ENCODE measurements at regions of chr14 and their contacts with region 1.

Region 1: DNA sequence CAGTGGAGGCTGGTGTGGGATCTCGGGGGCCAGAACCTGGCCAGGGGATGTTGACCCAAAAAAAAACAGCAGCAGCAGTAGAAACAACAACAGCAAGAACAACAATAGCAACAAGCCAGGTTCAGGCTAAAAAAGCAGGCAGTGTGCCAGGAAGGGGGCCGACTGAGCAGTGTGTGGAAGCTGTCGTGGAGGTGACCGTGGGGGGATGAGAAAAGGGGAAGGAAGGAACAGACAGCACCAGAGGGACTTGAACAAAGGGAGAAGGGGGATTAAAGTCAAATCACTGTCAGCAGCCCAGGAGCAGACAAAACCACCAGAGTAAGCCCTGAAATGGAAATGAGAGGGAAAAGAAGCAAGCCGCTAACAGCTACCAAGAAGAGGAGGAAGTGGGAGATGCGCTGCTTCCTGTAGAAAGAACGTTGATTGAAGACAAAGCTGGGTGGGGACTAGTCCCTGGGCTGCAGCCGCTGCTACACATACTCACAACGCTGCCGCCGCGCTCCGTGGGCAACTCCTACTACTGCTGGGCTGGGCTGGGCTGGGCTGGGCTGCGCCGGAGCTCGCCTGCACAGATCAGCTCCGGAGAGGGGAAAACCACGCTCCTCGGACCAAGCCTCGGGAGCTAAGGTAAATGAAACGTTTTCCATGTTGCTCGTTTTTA is at the start of gene GNG2:
- DNase-seq: peak; percentile 95
- H3K4me3 ChIP-seq: peak within 1 kb of the TSS; percentile 42 to 58 (median 56)
- H3K27ac ChIP-seq: peak within 1 kb of the TSS; percentile 29 to 71 (median 51)
- H3K4me1 ChIP-seq: peaks cover 12 to 24% (median 20%) of the 10 kb centered on the region in 4 donors
- H3K27me3 ChIP-seq: no peaks in the 10 kb centered on the region
- CTCF ChIP-seq: no peak
- EP300 ChIP-seq: no peak
- POLR2A ChIP-seq: no peak
- total RNA-seq, gene GNG2: 15.7 to 19.9 (median 17.7) TPM

Region 2: DNA sequence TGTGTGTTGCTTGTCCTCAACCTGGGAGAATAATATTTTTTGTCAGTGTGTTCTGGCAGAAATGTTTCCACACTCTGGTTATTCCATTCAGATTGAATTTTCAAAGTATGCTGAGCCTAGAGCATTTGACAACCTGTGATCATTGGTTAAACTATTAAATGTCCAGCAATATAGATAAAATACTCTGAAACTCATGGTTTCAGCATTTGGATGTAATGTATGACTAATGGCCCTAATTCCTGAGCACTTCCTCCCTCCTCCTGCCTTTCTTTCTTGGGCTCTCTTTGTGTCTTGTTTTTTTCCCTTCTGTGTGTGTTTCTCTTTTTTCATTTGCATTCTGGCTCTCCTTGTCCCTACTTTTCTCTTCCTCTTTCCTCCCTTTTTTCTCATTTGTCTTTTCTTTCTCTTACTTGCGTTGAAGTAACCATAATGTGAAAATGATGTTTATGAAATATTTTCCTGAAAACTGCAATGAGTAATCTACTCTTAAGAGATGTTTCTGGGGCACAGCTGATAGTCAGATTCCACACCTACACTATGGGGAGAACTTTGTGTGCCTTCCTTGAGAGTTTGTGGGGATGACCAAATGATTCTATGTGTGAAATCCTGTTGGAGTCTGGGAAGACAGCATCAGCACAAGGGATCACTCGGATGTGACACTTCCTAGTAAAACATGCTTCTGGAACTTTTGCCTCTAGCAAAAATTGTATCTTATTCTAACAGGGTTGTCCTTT is 134.0 kb before region 1 on chr14:
- intact Hi-C with region 1: no loop called
- DNase-seq: no peak
- H3K4me3 ChIP-seq: no peak overlapping the region
- H3K27ac ChIP-seq: no peak overlapping the region
- H3K4me1 ChIP-seq: no peaks in the 10 kb centered on the region
- H3K27me3 ChIP-seq: no peaks in the 10 kb centered on the region
- CTCF ChIP-seq: no peak
- EP300 ChIP-seq: no peak
- POLR2A ChIP-seq: no peak

Region 3: DNA sequence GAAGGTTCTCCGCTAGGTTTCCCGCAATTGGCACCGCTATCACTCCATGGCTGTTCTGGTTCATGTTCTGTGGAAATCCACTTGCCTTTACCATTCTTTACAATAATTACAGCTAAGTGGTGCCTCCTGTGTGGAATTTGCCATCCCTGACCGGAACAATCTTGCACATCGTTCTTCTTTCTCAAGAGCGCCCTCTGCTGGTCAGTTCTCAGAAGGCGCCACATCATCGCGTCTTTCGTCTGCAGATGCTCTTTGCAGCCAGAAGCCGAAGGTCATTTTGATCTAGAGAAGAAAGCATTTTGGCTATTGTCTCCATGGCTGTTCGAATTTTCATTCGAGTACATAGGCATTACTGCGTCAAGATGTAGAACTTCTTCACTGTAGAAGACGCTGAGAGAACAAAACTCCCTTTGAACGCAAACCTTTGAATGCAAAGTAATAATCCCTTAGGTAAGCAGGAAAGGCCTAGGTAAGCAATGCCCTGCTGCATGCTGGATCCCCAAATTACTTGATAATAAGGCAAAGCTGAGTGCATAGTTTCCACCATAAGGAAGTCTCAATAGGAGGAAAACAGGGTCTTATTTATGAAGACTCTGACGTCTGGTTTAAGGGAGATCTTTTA is 118.9 kb after region 1 on chr14:
- intact Hi-C with region 1: loop called (anchors 10 kb)
- DNase-seq: peak; percentile 96
- H3K4me3 ChIP-seq: no peak overlapping the region
- H3K27ac ChIP-seq: peak overlapping the region in 1 of 4 donors; percentile 39
- H3K4me1 ChIP-seq: peaks cover 0 to 13% (median 7%) of the 10 kb centered on the region in 4 donors
- H3K27me3 ChIP-seq: no peaks in the 10 kb centered on the region
- CTCF ChIP-seq: peak in 2 of 3 experiments; percentile 84 to 91
- EP300 ChIP-seq: no peak
- POLR2A ChIP-seq: no peak